Endothelial cell of umbilical vein (primary cell): ENCODE measurements at regions of chr5 and their contacts with region 1.

Region 1: DNA sequence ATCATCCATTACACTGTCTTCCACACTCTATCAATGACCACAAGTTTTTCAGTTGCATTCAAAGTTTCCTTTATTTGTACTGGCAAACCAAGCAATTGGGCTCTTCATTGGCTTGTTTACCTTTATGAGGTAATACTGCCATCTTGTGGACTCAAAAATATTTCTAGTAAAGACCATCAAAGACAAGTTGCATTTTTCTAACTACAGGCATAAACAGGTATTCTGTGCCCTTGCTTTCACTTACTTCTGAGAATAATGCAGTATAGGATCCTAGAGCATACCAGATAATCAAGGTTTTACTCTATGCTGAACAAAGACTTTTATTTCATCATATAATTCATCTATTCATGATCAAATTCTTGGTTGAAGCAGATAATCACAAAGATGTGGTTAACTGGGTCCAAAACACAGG is 173.7 kb upstream of the POU5F2 start:
- DNase-seq: peak; percentile 50
- H3K4me3 ChIP-seq: no peak overlapping the region
- H3K27ac ChIP-seq: no peak overlapping the region
- H3K4me1 ChIP-seq: no peaks in the 10 kb centered on the region
- H3K27me3 ChIP-seq: no peaks in the 10 kb centered on the region
- CTCF ChIP-seq: peak; percentile 24
- POLR2A ChIP-seq: no peak

Region 2: DNA sequence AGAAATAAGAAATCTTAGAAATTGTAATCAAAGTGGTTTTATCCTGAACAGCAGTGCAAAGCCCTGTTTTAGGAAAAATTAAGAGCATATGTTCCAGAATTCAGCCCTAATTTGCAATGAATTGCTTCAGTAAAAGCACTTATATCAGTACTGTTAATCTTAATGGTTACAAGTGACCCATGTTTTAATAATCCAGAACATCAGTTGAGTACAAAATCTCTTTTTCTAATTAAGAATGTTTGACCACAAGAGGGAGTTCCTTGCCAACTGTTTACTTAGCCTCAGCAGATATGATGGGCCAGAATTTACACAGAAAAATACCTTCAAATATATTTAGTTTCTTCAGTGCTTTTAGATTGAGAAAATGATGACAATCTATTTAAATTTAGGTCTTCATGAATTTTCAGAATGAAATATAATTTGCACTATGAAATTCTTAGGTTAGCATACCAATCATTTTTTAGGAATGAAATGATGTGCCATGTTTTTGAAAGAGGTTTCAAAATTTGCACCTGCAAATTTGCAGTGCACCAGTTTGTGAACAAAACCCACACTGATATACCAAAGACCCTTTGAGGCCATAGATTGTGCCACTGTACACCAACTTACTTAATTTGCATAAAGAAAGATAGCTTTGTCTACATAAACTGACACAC is 1605.7 kb before region 1 on chr5:
- CTCF ChIA-PET with region 1: interaction called, 4 read pairs
- POLR2A ChIA-PET with region 1: no interaction called
- dilution Hi-C with region 1: no loop called
- intact Hi-C with region 1: loop called (anchors 2 kb)
- DNase-seq: peak; percentile 31
- H3K4me3 ChIP-seq: no peak overlapping the region
- H3K27ac ChIP-seq: no peak overlapping the region
- H3K4me1 ChIP-seq: no peaks in the 10 kb centered on the region
- H3K27me3 ChIP-seq: no peaks in the 10 kb centered on the region
- CTCF ChIP-seq: peak in 1 of 2 donors; percentile 24
- POLR2A ChIP-seq: no peak

Region 3: DNA sequence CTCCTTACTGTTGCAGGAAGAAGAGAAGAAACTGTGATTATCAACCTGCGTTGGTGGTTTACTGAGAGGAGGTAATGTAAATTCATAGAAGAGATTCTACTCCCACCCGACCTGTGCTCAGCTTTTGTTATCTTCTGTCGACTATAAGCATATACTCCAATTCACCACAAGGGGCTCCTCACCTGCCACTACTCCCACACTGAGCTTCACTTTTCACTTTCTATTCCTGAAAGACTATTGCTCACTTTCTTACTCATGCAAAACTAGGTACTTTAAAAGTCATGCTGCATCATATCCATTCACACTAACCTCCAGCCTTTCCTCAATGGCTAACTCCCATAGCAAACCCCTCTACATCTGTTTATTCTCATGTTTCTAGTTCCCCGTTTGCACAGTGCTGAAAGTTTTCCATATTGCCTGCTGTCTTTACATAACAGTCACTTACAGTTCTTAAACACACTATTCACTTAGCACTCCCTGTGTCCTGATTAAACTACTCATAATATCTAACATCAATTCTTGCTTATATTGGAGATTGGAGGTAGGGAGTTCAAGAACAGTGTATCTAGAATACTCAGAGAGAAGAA is 1396.7 kb before region 1 on chr5:
- CTCF ChIA-PET with region 1: no interaction called
- POLR2A ChIA-PET with region 1: no interaction called
- dilution Hi-C with region 1: no loop called
- intact Hi-C with region 1: loop called (anchors 10 kb)
- DNase-seq: peak; percentile 50
- H3K4me3 ChIP-seq: no peak overlapping the region
- H3K27ac ChIP-seq: no peak overlapping the region
- H3K4me1 ChIP-seq: no peaks in the 10 kb centered on the region
- H3K27me3 ChIP-seq: no peaks in the 10 kb centered on the region
- CTCF ChIP-seq: peak; percentile 47 to 69
- POLR2A ChIP-seq: no peak

Region 4: GRCh38 chr5:92687821-92688722 is 1227.1 kb before region 1 on chr5:
- CTCF ChIA-PET with region 1: interaction called, 3 read pairs
- POLR2A ChIA-PET with region 1: no interaction called
- dilution Hi-C with region 1: no loop called
- intact Hi-C with region 1: loop called (anchors 5 kb)
- DNase-seq: peak; percentile 46
- H3K4me3 ChIP-seq: no peak overlapping the region
- H3K27ac ChIP-seq: no peak overlapping the region
- H3K4me1 ChIP-seq: no peaks in the 10 kb centered on the region
- H3K27me3 ChIP-seq: no peaks in the 10 kb centered on the region
- CTCF ChIP-seq: no peak
- POLR2A ChIP-seq: no peak

Region 5: GRCh38 chr5:92916036-92916435 is 999.1 kb before region 1 on chr5:
- CTCF ChIA-PET with region 1: no interaction called
- POLR2A ChIA-PET with region 1: no interaction called
- dilution Hi-C with region 1: no loop called
- intact Hi-C with region 1: loop called (anchors 10 kb)
- DNase-seq: peak; percentile 61
- H3K4me3 ChIP-seq: no peak overlapping the region
- H3K27ac ChIP-seq: no peak overlapping the region
- H3K4me1 ChIP-seq: no peaks in the 10 kb centered on the region
- H3K27me3 ChIP-seq: no peaks in the 10 kb centered on the region
- CTCF ChIP-seq: no peak
- POLR2A ChIP-seq: no peak

Region 6: GRCh38 chr5:93022799-93023447 is 892.2 kb before region 1 on chr5:
- CTCF ChIA-PET with region 1: no interaction called
- POLR2A ChIA-PET with region 1: no interaction called
- dilution Hi-C with region 1: no loop called
- intact Hi-C with region 1: no loop called
- DNase-seq: peak; percentile 11
- H3K4me3 ChIP-seq: no peak overlapping the region
- H3K27ac ChIP-seq: no peak overlapping the region
- H3K4me1 ChIP-seq: no peaks in the 10 kb centered on the region
- H3K27me3 ChIP-seq: no peaks in the 10 kb centered on the region
- CTCF ChIP-seq: no peak
- POLR2A ChIP-seq: no peak

Region 7: DNA sequence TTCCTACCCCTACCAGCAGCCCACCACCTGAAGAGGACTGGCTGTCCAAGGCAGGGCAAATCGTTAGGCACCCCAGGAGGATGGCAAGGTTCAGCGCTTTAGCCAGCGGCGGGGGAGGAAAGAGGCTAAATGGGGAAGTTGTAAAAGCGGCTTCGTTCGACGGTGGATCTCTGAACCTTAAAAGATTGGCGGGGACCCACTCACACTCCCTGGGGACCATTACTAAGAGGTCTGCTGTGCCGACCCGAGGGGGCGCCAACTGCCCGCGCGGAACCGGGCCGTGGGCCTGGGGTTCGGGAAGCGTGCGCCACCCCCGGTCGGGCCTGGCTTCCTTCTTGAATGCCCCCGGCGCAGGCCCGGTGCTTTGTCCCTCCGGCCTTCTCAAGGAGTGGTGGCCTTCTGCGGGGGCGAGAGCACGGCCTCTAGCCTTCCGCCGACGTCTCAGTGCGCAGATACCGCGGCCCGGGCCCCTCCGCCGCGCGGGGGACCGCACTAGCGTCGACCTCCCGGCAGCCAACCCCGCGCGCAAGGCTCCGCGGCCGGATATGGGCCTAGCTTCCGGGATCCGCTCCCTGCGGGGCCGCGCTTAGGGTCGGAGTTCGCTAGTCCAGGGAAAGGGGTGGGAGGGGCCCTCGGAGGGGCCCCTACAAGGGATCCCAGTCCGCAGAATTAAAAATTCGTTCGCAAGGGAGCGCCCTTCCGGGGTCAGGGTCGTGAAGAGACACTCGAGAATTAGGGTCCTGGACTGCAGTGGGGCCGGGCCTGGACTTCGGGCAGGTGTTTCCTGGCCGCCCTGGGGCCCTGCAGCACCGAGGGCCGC is 344.6 kb before region 1 on chr5:
- CTCF ChIA-PET with region 1: no interaction called
- POLR2A ChIA-PET with region 1: no interaction called
- dilution Hi-C with region 1: no loop called
- intact Hi-C with region 1: no loop called
- DNase-seq: no peak
- H3K4me3 ChIP-seq: no peak overlapping the region
- H3K27ac ChIP-seq: no peak overlapping the region
- H3K4me1 ChIP-seq: peaks cover 7% of the 10 kb centered on the region
- H3K27me3 ChIP-seq: no peaks in the 10 kb centered on the region
- CTCF ChIP-seq: no peak
- POLR2A ChIP-seq: no peak

Region 8: DNA sequence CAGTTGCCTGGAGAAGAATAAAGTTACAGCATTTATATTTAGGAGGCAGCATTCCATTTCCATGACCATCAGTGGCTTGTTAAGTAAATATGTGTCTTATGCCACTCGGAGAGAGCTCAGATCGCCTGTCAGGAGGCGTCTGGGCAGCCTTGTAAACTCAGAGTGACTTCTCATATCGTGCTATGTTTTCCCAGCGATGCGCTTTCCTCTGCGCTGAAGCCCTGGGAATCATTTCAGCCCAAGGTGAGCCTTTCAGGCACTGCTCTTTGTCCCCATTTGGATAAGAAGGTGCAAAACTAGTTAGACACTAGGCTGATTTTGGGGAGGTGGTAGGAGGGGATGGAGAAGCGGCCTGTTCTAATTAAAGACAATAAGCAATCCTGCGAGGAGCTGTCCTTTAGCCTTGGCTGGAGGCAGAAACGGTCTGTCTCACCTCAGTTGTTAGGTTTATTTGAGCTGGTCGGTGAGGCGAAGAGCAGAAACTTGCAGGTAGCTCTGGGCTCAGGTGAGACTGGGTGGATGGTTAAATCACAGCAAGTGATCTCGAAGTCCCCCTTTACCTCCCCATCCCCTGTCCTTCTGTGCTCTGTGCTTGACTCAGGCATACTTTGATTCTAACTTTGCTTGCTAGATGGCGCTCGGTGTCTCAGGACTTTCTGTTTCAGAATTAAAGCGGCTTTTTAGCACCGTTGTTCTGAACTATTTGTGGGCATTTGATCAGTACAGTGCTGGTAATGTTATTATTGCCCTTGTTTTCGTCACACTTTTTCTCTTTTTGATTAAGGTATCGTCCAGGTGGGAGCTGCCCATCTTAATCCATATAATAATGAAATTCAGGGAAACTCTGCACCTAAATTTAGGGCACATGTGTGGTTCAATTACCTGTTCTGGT is 307.5 kb before region 1 on chr5:
- CTCF ChIA-PET with region 1: interaction called, 3 read pairs
- POLR2A ChIA-PET with region 1: no interaction called
- dilution Hi-C with region 1: no loop called
- intact Hi-C with region 1: loop called (anchors 5 kb)
- DNase-seq: peak; percentile 74
- H3K4me3 ChIP-seq: no peak overlapping the region
- H3K27ac ChIP-seq: no peak overlapping the region
- H3K4me1 ChIP-seq: peaks cover 6% of the 10 kb centered on the region
- H3K27me3 ChIP-seq: peaks cover 71 to 98% of the 10 kb centered on the region in 2 experiments
- CTCF ChIP-seq: peak; percentile 28 to 59
- POLR2A ChIP-seq: no peak

Region 9: GRCh38 chr5:93874080-93874479 is 41.1 kb before region 1 on chr5:
- CTCF ChIA-PET with region 1: no interaction called
- POLR2A ChIA-PET with region 1: no interaction called
- dilution Hi-C with region 1: no loop called
- intact Hi-C with region 1: no loop called
- DNase-seq: peak; percentile 77
- H3K4me3 ChIP-seq: no peak overlapping the region
- H3K27ac ChIP-seq: peak overlapping the region; percentile 17
- H3K4me1 ChIP-seq: peaks cover 9% of the 10 kb centered on the region
- H3K27me3 ChIP-seq: no peaks in the 10 kb centered on the region
- CTCF ChIP-seq: no peak
- POLR2A ChIP-seq: no peak